ENCODE measurements at regions of chr6 and their contacts with region 1.

Region 1: DNA sequence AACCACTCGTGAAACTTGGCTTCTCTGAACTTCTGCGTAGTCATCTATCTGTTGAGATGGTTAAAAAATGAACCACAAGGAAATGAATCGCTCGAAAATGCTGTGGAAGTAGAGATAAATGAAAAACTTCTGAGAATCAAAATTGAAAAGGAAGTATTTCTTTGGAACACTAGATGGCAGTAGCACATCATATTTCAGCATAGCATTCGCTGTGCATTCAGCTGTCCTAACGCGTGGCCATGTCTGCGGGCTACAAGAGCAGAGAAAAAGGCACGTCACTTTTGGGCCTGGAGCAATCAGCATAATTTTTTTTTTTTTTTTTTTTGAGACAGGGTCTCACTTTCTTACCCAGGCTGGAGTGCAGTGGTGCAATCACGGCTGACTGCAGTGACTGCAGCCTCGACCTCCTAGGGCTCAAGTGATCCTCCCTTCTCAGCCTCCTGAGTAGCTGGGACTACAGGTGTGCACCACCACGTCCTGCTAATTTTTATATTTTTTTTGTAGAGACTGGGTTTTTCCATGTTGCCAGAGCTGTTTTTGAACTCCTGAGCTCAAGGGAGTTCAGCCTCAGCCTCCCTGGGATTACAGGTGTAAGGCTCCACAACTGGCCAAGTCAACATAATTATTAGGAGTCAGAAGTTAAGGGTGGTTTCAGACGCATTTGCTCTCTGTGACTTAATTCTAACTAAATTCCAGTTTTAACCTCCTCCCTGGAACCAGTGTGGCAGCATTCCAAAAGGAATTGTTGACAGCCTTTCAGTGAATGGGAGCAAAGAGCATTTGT is 8.8 kb upstream of the PERP start:
- DNase-seq: peak; percentile 61
- CTCF ChIP-seq: peak; percentile 51

Region 2: GRCh38 chr6:137853569-137854213 is 262.4 kb before region 1 on chr6:
- CTCF ChIA-PET with region 1: no interaction called
- POLR2A ChIA-PET with region 1: no interaction called
- DNase-seq: no peak
- CTCF ChIP-seq: no peak

Region 3: GRCh38 chr6:138099832-138100231 is 16.2 kb before region 1 on chr6:
- CTCF ChIA-PET with region 1: interaction called, 27 read pairs
- POLR2A ChIA-PET with region 1: no interaction called
- DNase-seq: no peak
- CTCF ChIP-seq: no peak

Region 4: DNA sequence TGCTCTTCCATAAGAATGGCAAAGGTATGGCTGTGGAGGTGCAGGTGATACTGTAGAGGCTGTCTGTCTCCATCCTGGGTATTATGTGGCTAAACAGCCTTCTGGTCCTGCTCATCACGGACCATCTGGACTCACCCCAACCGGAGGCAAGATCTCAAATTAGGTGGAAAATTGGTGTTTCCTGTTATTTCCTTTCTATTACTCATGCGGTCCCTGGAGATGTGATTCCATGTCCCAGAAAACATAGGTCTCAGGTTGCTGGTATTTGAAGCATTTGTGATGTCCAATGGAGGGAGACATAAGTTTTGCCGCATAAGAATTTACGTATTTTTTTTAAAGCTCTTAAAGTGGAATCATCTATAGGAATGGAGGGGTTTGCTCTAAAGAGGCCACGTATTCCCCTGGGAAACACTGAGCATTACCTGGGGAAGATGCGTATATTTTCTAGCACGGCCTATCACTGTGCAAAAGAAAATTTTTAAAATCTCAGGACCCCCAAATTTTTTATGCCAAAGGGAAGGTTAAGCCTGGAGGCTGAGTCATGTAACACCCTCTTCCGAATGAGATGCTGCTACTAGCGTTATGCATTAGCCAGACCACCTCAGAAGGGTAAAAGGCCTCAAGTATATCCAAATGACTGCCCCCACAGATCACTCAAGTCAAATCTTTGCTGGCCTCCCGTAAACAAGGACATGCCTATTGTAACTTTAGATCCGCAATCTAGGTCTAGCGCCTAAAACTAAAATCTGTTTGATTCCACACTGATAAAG is 124.6 kb after region 1 on chr6:
- CTCF ChIA-PET with region 1: no interaction called
- POLR2A ChIA-PET with region 1: no interaction called
- DNase-seq: no peak
- CTCF ChIP-seq: no peak

Region 5: DNA sequence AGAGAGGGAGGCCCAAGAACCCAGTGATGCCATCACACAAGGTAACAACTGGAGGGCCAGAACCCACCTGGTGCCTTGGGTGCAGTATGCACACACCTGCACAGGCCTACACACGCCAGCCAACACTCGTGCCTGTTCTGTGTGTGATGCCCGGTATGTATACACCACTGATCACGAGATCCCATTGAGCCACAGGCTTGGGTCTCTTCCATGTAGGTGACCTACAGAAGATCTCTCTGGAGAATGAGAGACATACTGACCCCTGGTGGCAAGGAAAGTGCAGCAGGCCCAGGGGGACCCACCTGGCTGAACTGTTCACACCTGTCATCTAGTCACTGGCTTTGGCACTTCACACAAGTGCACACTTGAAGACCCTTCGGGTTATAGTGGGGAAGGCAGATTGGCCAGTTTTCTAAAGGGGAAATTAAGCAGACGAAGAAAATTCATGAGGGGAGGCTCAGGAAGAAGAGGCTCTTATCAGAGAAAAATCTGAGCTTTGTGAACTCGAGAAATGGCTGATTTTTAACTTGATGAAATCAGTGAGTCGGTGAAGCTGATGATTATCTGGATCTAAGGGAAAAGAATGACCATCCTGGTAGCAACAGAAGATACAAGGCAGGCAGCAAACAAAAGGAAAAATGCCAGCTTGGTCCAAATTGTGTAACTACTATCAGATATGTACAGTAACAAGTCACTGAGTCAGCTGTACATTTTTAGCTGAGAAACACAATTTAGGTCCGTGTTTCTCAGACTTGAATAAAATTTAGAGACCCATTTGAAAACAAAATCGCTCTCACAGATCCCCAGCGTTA is 171.3 kb after region 1 on chr6:
- CTCF ChIA-PET with region 1: interaction called, 105 read pairs
- POLR2A ChIA-PET with region 1: no interaction called
- DNase-seq: peak; percentile 63
- CTCF ChIP-seq: peak; percentile 79

Region 6: GRCh38 chr6:138509371-138509770 is 393.3 kb after region 1 on chr6:
- CTCF ChIA-PET with region 1: interaction called, 37 read pairs
- POLR2A ChIA-PET with region 1: no interaction called
- DNase-seq: peak; percentile 28
- CTCF ChIP-seq: peak; percentile 63

Region 7: GRCh38 chr6:138526822-138527235 is 410.8 kb after region 1 on chr6:
- CTCF ChIA-PET with region 1: interaction called, 48 read pairs
- POLR2A ChIA-PET with region 1: no interaction called
- DNase-seq: no peak
- CTCF ChIP-seq: no peak

Region 8: DNA sequence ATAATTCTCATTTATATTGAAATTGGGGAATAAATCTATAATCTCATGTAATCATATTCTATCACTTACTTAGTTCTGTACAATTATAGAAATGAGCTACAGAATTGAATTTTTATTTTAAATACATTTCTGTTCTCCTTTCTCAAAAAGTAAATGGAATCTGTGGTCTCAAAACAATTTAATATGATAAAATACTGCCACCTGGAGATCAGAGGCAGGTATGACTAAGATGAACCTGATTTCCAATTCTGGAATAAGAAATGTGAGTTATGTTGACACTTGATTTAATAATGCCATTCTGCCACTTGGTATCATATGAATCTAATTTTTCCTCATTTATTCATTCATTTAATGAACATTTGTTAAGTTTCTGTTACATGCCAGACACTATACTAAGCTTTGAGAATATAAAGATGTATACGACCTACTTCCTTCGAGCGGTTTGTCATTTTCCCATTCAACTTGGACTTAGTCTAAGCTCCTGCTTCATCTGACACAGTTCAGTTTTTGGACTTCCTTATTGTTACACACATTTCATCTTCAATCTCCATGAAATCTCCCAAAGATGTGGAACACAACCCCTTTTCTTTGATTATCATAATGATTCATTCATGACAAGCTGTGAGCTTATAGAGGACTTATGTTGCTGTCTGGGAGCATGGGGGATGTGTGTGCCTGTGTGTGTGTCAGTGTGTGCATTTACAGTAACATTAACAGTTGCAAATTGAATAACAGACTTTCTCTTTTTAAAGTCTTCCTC is 650.0 kb after region 1 on chr6:
- CTCF ChIA-PET with region 1: interaction called, 22 read pairs
- POLR2A ChIA-PET with region 1: no interaction called
- DNase-seq: peak; percentile 43
- CTCF ChIP-seq: peak; percentile 60